ENCODE measurements at regions of chr12 and their contacts with region 1.

Region 1: DNA sequence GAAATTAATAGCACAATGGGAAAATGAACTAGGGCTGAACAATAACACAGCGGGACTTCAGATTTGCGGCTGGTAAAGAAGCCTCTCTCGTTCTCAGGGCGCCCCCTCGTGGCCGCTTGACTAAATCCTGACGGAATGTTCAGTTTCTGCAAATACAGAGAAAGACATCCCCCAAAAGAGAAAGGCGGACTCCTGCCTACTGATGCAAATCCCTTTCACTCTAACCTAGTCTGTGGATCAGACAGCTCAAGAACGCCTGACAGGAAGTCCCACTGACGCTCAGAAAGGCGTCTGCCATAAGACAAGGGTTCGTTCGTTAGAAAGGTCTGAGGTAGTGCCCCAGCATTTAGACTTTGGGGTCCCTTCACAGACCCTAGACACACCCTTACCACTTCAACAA is 2.5 kb downstream of the NUAK1 start:
- DNase-seq: peak; percentile 59 to 89
- ATAC-seq: peak; percentile 16 to 27; a peak in 3 of 6 replicates
- H3K4me3 ChIP-seq: peak overlapping the region; percentile 83
- H3K27ac ChIP-seq: peak overlapping the region; percentile 99
- H3K4me1 ChIP-seq: peaks cover 67% of the 10 kb centered on the region
- CTCF ChIP-seq: peak; percentile 95
- EP300 ChIP-seq: no peak
- POLR2A ChIP-seq: no peak
- RAD21 ChIP-seq: peak; percentile 99

Region 2: DNA sequence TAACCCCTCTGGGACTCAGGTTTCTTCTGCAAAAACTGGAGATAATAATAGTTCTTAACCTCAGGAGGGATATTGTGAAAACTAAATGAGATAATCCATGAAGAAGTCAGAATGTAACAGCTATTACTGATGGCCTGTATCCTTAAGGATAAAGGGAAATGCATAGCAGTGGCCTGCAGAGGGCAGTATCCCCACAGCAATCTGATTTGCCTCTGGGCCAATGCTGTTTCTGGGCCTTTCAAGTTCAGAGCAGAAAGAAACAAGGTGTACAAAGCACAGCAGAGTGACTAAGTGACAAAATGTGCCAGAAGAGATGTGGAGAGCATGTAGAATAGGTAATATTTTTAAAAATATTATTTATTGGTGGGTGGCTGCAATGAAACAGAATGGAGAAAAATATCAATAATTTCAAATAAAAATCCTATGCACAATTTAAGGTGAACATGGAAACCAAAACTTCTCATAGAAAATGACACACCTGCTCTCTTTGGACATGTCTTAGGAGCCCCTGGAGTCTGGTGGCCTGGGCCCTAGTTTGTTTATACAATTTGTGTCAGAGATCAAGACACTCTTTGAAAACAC is 715.5 kb before region 1 on chr12:
- CTCF ChIA-PET with region 1: interaction called, 135 read pairs
- POLR2A ChIA-PET with region 1: interaction called, 3 read pairs
- DNase-seq: peak; percentile 62 to 79
- ATAC-seq: peak; percentile 76 to 88
- H3K4me3 ChIP-seq: no peak overlapping the region
- H3K27ac ChIP-seq: peak overlapping the region in 1 of 2 experiments; percentile 63; a peak in 3 of 6 replicates
- H3K4me1 ChIP-seq: peaks cover 12% of the 10 kb centered on the region; the same call in 1 of the 3 replicates
- CTCF ChIP-seq: peak; percentile 97
- EP300 ChIP-seq: no peak
- POLR2A ChIP-seq: no peak
- RAD21 ChIP-seq: peak; percentile 99 to 100

Region 3: DNA sequence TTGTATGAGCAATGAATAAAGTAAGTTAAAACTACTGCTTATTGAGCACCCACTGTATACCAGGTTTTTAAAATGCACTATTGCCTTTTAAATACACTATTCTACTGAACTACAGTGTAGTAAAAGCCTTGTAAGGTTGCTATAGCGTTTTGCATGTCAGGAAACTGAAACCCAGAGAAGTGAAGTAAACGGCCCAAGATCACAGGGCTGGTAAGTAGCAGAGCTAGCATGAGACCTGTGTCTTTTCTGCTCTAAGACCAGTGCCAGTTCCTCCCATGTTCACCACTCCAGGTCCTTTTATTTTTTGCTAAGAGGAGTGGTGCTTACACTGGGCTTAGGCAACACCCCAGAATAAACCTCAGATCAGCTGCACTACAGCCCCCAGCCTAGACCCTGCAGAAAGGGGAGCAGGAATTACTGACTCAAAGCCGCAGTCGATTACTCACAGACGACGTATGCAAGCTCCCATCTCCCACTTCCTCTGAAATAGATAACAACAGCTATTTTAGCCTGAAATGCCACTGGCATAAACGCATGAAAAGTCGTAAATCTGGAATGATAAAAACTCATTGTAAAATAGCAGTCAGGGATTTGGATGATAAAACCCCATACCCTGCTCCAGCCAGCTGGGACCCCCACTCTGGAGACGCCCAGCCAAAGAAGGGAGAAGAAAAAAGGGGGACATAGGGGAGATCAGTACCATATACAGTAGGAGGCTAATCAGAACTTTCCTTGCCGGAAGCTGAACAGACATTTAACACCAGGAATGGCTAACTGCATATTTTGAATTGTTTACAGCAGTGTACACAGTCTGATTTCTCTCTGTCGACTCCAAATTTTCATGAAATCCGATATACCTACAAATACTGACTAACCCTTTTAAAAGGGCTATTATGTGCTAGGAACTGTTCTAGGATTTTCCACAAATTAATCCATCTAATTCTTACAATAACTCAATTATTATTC is 105.8 kb before region 1 on chr12:
- CTCF ChIA-PET with region 1: interaction called, 52 read pairs
- POLR2A ChIA-PET with region 1: interaction called, 17 read pairs
- DNase-seq: peak; percentile 42 to 83
- ATAC-seq: peak; percentile 90 to 91
- H3K4me3 ChIP-seq: peak overlapping the region; percentile 5; the same call in 1 of the 3 replicates
- H3K27ac ChIP-seq: peak overlapping the region; percentile 80 to 88
- H3K4me1 ChIP-seq: peaks cover 39% of the 10 kb centered on the region
- CTCF ChIP-seq: no peak
- EP300 ChIP-seq: peak; percentile 37 to 80; a peak in 2 of 5 replicates
- POLR2A ChIP-seq: no peak
- RAD21 ChIP-seq: peak in 1 of 2 experiments; percentile 3; a peak in 4 of 5 replicates

Region 4: GRCh38 chr12:106084014-106084671 is 52.1 kb before region 1 on chr12:
- CTCF ChIA-PET with region 1: interaction called, 31 read pairs
- POLR2A ChIA-PET with region 1: no interaction called
- DNase-seq: peak; percentile 57 to 71
- ATAC-seq: peak; percentile 77 to 83
- H3K4me3 ChIP-seq: no peak overlapping the region
- H3K27ac ChIP-seq: peak overlapping the region; percentile 73 to 87
- H3K4me1 ChIP-seq: peaks cover 74% of the 10 kb centered on the region
- CTCF ChIP-seq: no peak
- EP300 ChIP-seq: peak; percentile 32 to 64; a peak in 2 of 5 replicates
- POLR2A ChIP-seq: no peak
- RAD21 ChIP-seq: peak; percentile 23 to 25; a peak in 4 of 5 replicates

Region 5: DNA sequence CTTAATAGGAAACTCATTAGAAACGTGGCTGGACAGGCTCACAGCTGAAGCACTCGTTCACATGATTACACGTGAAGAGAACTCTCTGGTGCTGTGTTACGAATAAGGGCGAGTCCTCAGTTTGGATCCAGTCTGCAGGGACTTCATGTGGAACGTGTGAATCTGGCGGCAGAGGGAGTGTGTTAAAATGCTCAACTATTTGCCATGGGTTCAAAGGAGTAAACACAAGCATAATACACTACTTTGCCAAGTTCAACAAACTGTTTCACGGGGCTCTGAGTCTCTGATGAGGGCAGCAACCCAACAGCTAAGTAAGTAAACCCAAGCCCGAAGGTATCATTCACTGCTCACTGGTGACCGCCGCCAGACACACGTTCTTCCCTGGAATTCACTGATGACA is 39.9 kb before region 1 on chr12:
- CTCF ChIA-PET with region 1: interaction called, 32 read pairs
- POLR2A ChIA-PET with region 1: interaction called, 4 read pairs
- DNase-seq: peak in 1 of 2 experiments; percentile 72
- ATAC-seq: peak; percentile 33 to 65; a peak in 4 of 6 replicates
- H3K4me3 ChIP-seq: peak overlapping the region; percentile 15; the same call in 1 of the 3 replicates
- H3K27ac ChIP-seq: peak overlapping the region; percentile 66 to 88
- H3K4me1 ChIP-seq: peaks cover 87% of the 10 kb centered on the region
- CTCF ChIP-seq: no peak
- EP300 ChIP-seq: no peak
- POLR2A ChIP-seq: no peak
- RAD21 ChIP-seq: peak; percentile 4 to 11; a peak in 1 of 5 replicates

Region 6: DNA sequence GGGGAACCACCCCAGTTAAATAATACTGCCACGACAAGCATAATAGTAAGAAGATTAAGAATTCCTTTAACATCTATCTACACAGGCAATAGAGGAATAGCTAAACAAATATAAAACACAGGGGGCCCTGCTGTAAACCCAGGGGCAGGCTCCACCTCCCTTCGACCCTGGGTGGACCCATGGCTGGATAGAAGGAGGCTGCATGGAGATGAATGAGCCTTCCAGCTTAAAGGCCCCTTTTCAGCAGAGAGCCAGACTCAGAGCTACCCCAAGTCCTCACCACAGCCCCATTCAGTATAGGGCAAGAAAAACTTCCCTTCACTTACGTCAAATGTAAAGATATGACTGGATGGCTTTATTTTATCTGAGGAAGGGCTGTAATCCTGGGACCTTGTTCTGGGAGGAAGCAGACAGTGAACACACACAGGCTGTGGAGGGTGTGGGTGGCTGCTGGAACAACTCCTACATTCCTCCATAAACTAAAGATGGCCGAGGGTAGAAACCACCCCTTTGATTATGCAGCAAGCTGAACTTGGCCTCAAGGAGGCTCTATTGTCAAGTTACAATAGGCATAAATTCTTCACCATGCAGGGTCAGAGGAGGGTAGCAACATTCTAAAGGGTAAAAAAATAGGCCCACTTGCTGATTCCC is 28.0 kb before region 1 on chr12:
- CTCF ChIA-PET with region 1: interaction called, 96 read pairs
- POLR2A ChIA-PET with region 1: interaction called, 16 read pairs
- DNase-seq: peak in 1 of 2 experiments; percentile 62
- ATAC-seq: peak; percentile 49 to 65; a peak in 5 of 6 replicates
- H3K4me3 ChIP-seq: no peak overlapping the region
- H3K27ac ChIP-seq: peak overlapping the region; percentile 87 to 99
- H3K4me1 ChIP-seq: peaks cover 83% of the 10 kb centered on the region
- CTCF ChIP-seq: no peak
- EP300 ChIP-seq: no peak
- POLR2A ChIP-seq: no peak
- RAD21 ChIP-seq: peak in 1 of 2 experiments; percentile 37; a peak in 2 of 5 replicates

Region 7: DNA sequence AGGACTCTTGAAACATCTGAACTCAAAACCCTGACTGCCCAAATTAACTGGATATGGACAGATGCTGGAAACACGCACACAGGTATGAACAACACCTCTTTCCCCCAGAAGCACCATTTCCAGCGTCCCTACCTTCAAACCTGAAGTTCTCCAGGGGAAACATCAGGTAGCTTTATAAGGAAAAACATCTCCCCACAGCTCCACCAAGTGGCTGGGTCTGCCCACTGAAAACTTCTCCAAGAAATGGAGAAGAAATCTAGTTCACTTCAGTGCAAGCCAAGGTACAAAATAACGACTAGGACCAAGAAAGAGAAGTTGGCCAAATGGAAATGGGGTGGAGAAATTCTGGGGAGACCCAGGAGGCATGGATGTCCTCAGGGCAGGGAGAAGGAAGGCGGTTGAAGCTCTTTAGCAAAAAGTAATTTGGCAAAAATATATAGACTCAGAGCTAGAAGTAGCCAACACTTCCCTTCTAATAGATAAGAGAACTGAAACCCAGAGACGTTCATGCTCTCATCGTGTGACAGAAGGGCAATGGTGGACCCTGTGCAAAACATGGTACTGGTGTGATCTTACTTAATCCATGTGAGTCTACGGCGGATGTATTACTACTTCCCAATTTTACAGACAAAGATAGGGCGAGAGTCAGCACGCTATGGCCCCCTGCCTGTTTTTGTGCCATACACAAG is 13.0 kb after region 1 on chr12:
- CTCF ChIA-PET with region 1: interaction called, 112 read pairs
- POLR2A ChIA-PET with region 1: interaction called, 11 read pairs
- DNase-seq: peak; percentile 45 to 58
- ATAC-seq: peak; percentile 81 to 87; a peak in 4 of 6 replicates
- H3K4me3 ChIP-seq: no peak overlapping the region
- H3K27ac ChIP-seq: no peak overlapping the region
- H3K4me1 ChIP-seq: peaks cover 13% of the 10 kb centered on the region; the same call in 1 of the 3 replicates
- CTCF ChIP-seq: peak; percentile 83
- EP300 ChIP-seq: no peak
- POLR2A ChIP-seq: no peak
- RAD21 ChIP-seq: peak; percentile 75 to 77

Region 8: DNA sequence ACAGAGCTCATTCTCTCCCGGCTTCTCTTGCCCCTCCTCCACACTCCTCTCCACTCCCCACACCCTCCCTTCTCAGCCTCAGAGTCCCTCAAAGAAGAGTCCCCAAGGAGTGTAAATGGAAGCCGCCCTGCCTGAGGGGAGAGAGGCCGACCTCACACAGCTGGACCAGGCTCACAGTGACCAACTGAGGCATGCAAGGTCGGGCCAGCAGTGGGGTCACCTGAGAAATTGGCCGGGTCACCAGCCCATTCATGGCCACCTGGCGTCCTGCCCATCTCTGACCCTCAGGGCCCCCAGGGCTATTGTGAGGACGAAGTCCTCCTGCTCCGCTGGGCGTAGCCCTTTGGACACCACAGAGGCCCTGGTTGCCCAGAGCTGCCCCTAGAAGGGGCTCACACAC is 52.0 kb after region 1 on chr12:
- CTCF ChIA-PET with region 1: no interaction called
- POLR2A ChIA-PET with region 1: no interaction called
- DNase-seq: no peak
- ATAC-seq: no peak
- H3K4me3 ChIP-seq: no peak overlapping the region
- H3K27ac ChIP-seq: no peak overlapping the region
- H3K4me1 ChIP-seq: no peaks in the 10 kb centered on the region
- CTCF ChIP-seq: no peak
- EP300 ChIP-seq: no peak
- POLR2A ChIP-seq: no peak
- RAD21 ChIP-seq: no peak

Measured in A549 (cell line).